Naive thymus-derived CD4-positive, alpha-beta T cell (primary cell): ENCODE measurements at regions of chr20 and their contacts with region 1.

Region 1: GRCh38 chr20:62900052-62900691 is 26.1 kb downstream of the DIDO1 start:
- DNase-seq: peak; percentile 60 to 82 (median 78)
- ATAC-seq: peak; percentile 97
- H3K4me3 ChIP-seq: no peak overlapping the region
- H3K4me3 Mint-ChIP-seq: peak overlapping the region; percentile 54 to 81 (median 69)
- H3K27ac ChIP-seq: peak overlapping the region; percentile 60
- H3K27ac Mint-ChIP-seq: peak overlapping the region; percentile 75 to 95 (median 90)
- H3K4me1 ChIP-seq: peaks cover 13 to 22% of the 10 kb centered on the region in 2 donors
- H3K4me1 Mint-ChIP-seq: peaks cover 23 to 42% (median 34%) of the 10 kb centered on the region in 7 donors
- H3K27me3 ChIP-seq: no peaks in the 10 kb centered on the region
- H3K27me3 Mint-ChIP-seq: no peaks in the 10 kb centered on the region

Region 2: GRCh38 chr20:62550087-62550632 is 350.0 kb before region 1 on chr20:
- CTCF ChIA-PET with region 1: no interaction called
- POLR2A ChIA-PET with region 1: no interaction called
- intact Hi-C with region 1: no loop called
- DNase-seq: peak in 1 of 9 donors; percentile 8
- ATAC-seq: no peak
- H3K4me3 ChIP-seq: no peak overlapping the region
- H3K4me3 Mint-ChIP-seq: peak overlapping the region; percentile 15 to 83 (median 72)
- H3K27ac ChIP-seq: no peak overlapping the region
- H3K27ac Mint-ChIP-seq: peak overlapping the region in 4 of 9 donors; percentile 42 to 95 (median 68)
- H3K4me1 ChIP-seq: peaks cover 0 to 6% of the 10 kb centered on the region in 2 donors
- H3K4me1 Mint-ChIP-seq: peaks cover 0 to 9% (median 5%) of the 10 kb centered on the region in 7 donors
- H3K27me3 ChIP-seq: peaks cover 0 to 3% of the 10 kb centered on the region in 2 donors
- H3K27me3 Mint-ChIP-seq: peaks cover 20 to 43% (median 31%) of the 10 kb centered on the region in 5 donors

Region 3: GRCh38 chr20:62616728-62617621 is 283.2 kb before region 1 on chr20:
- CTCF ChIA-PET with region 1: no interaction called
- POLR2A ChIA-PET with region 1: no interaction called
- intact Hi-C with region 1: no loop called
- DNase-seq: peak; percentile 42 to 82 (median 57)
- ATAC-seq: peak; percentile 86
- H3K4me3 ChIP-seq: no peak overlapping the region
- H3K4me3 Mint-ChIP-seq: peak overlapping the region in 4 of 10 donors; percentile 42 to 82 (median 64)
- H3K27ac ChIP-seq: no peak overlapping the region
- H3K27ac Mint-ChIP-seq: peak overlapping the region in 5 of 9 donors; percentile 28 to 90 (median 72)
- H3K4me1 ChIP-seq: peaks cover 16 to 27% of the 10 kb centered on the region in 2 donors
- H3K4me1 Mint-ChIP-seq: peaks cover 7 to 35% (median 19%) of the 10 kb centered on the region in 7 donors
- H3K27me3 ChIP-seq: no peaks in the 10 kb centered on the region
- H3K27me3 Mint-ChIP-seq: peaks cover 0 to 9% (median 0%) of the 10 kb centered on the region in 5 donors

Region 4: DNA sequence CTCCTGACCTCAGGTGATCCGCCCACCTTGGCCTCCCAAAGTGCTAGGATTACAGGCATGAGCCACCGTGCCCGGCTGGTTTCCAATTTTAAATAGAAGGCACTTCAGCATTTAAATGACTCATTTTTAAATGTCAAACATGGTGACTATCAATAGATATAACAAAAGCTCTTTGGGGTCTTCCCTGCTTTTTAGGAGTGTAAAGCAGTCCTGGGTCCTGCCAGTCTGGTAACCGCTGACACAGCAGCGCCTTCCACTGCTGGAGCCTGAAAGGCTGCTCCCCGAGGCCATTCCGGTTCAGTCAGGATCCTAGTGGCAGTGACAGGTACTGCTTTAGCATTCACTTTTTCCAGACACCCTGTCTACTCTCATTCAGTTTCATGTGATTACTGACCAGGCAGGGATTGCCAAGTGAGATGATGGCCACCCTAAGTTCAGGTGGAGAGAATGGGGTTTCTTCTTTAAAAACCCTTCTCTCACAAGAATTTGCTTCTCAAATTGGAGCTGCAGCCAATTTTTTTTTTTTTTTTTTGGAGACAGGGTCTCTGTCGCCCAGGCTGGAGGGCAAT is 21.0 kb after region 1 on chr20:
- CTCF ChIA-PET with region 1: interaction called, 102 read pairs
- POLR2A ChIA-PET with region 1: interaction called, 20 read pairs
- intact Hi-C with region 1: loop called (anchors 1 kb)
- DNase-seq: peak in 8 of 9 donors; percentile 51 to 78 (median 61)
- ATAC-seq: peak; percentile 69
- H3K4me3 ChIP-seq: peak overlapping the region; percentile 26
- H3K4me3 Mint-ChIP-seq: peak overlapping the region; percentile 76 to 89 (median 84)
- H3K27ac ChIP-seq: peak overlapping the region; percentile 63
- H3K27ac Mint-ChIP-seq: peak overlapping the region; percentile 67 to 94 (median 91)
- H3K4me1 ChIP-seq: peaks cover 74 to 84% of the 10 kb centered on the region in 2 donors
- H3K4me1 Mint-ChIP-seq: peaks cover 69 to 87% (median 82%) of the 10 kb centered on the region in 7 donors
- H3K27me3 ChIP-seq: no peaks in the 10 kb centered on the region
- H3K27me3 Mint-ChIP-seq: no peaks in the 10 kb centered on the region

Region 5: DNA sequence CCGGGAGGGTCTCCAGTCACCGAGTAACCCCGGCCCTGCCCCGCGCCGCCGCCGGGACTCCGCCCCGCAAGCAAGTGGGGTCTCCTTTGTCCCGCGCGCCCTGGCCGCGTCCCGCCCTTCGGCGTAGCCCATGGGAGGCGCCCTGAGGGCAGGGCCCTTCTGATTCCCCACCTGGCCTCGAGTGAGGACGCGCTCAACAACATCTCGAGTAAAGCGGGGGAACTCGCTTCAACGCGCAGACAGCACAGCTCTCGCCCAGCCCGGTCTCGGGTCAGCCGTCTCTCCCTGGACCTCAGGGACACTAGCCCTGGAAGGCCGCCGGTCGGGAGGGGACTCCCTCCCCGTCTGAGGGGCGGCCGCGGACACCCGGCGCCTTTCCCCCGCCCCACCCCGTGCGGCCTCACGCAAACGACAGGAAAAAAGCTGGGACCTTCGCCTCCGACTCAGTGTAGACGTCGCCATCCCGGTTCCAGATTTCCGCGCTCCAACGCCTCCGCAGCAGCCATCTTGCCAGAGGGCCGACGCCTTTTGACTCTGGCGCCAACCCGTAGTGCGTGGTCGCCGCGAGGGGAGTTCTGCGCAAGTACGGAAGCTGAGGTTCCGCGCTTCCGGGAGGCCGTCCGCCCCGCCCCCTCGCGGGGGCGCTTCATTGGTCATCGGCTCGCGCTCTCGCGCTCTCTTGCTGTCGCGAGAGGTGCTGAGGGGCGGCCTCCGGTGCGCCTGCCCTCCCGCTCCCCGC is 37.4 kb after region 1 on chr20:
- CTCF ChIA-PET with region 1: interaction called, 8 read pairs
- POLR2A ChIA-PET with region 1: interaction called, 10 read pairs
- intact Hi-C with region 1: loop called (anchors 1 to 5 kb)
- DNase-seq: peak; percentile 96 to 98 (median 97)
- ATAC-seq: peak; percentile 95
- H3K4me3 ChIP-seq: peak overlapping the region; percentile 94
- H3K4me3 Mint-ChIP-seq: peak overlapping the region in 6 of 10 donors; percentile 94 to 98 (median 96)
- H3K27ac ChIP-seq: peak overlapping the region; percentile 97
- H3K27ac Mint-ChIP-seq: peak overlapping the region; percentile 88 to 98 (median 95)
- H3K4me1 ChIP-seq: peaks cover 34 to 37% of the 10 kb centered on the region in 2 donors
- H3K4me1 Mint-ChIP-seq: peaks cover 26 to 51% (median 40%) of the 10 kb centered on the region in 7 donors
- H3K27me3 ChIP-seq: no peaks in the 10 kb centered on the region
- H3K27me3 Mint-ChIP-seq: no peaks in the 10 kb centered on the region

Region 6: DNA sequence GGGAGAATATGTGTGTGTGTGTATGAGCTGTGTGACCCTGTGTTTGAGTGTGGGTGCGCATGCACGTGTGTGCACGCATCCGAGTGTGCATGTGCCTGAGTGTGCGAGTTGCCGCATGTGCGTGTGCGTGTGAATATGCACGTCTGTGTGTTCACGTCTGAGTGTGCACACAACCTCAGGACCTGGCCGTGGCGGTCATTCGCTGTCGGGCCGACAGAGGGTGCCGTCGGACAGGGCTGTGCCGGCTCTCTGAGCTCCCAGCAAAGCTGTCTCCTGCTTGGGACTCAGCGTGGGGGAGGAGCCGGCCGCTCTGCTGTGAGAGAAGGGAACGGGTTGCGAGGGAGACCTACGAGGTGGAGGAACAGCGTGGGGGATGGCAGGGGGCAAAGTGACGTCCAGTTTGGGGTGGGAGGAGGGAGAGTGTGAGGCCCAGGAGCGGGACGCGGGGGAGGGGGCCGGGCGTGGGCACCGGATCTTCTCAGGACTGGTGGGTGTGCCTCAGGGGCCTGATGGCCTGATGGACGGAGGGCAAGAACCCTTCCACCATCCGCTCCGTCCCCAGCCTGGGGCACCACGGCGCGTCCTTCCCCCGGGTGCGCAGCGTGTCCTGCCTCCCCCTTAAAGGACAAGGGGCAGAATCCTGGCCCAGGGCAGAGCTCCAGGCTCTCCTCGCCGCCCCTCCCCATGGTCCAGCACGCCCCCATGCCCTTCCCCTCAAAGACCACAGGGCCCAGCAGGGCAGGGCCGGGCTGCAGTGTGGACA is 72.3 kb after region 1 on chr20:
- CTCF ChIA-PET with region 1: interaction called, 6 read pairs
- POLR2A ChIA-PET with region 1: no interaction called
- intact Hi-C with region 1: loop called in 1 of 2 experiments (anchors 1 kb)
- DNase-seq: peak; percentile 70 to 86 (median 79)
- ATAC-seq: peak; percentile 97
- H3K4me3 ChIP-seq: peak overlapping the region; percentile 36
- H3K4me3 Mint-ChIP-seq: peak overlapping the region; percentile 36 to 85 (median 62)
- H3K27ac ChIP-seq: no peak overlapping the region
- H3K27ac Mint-ChIP-seq: peak overlapping the region in 4 of 9 donors; percentile 3 to 38 (median 17)
- H3K4me1 ChIP-seq: peaks cover 8 to 13% of the 10 kb centered on the region in 2 donors
- H3K4me1 Mint-ChIP-seq: peaks cover 13 to 22% (median 15%) of the 10 kb centered on the region in 7 donors
- H3K27me3 ChIP-seq: peaks cover 9 to 10% of the 10 kb centered on the region in 2 donors
- H3K27me3 Mint-ChIP-seq: peaks cover 27 to 49% (median 37%) of the 10 kb centered on the region in 5 donors